Naive thymus-derived CD4-positive, alpha-beta T cell (primary cell): ENCODE measurements at regions of chr3 and their contacts with region 1.

Region 1: GRCh38 chr3:4030624-4031023 is 231.4 kb downstream of the LRRN1 start:
- DNase-seq: no peak
- ATAC-seq: no peak
- H3K4me3 ChIP-seq: no peak overlapping the region
- H3K4me3 Mint-ChIP-seq: no peak overlapping the region
- H3K27ac ChIP-seq: no peak overlapping the region
- H3K27ac Mint-ChIP-seq: no peak overlapping the region
- H3K4me1 ChIP-seq: no peaks in the 10 kb centered on the region
- H3K4me1 Mint-ChIP-seq: no peaks in the 10 kb centered on the region
- H3K27me3 ChIP-seq: no peaks in the 10 kb centered on the region
- H3K27me3 Mint-ChIP-seq: no peaks in the 10 kb centered on the region

Region 2: GRCh38 chr3:3991598-3991997 is 39.0 kb before region 1 on chr3:
- CTCF ChIA-PET with region 1: no interaction called
- POLR2A ChIA-PET with region 1: no interaction called
- intact Hi-C with region 1: loop called in 1 of 2 experiments (anchors 1 kb)
- DNase-seq: no peak
- ATAC-seq: no peak
- H3K4me3 ChIP-seq: no peak overlapping the region
- H3K4me3 Mint-ChIP-seq: no peak overlapping the region
- H3K27ac ChIP-seq: no peak overlapping the region
- H3K27ac Mint-ChIP-seq: peak overlapping the region in 1 of 9 donors; percentile 76
- H3K4me1 ChIP-seq: no peaks in the 10 kb centered on the region
- H3K4me1 Mint-ChIP-seq: peaks cover 0 to 4% (median 0%) of the 10 kb centered on the region in 7 donors
- H3K27me3 ChIP-seq: no peaks in the 10 kb centered on the region
- H3K27me3 Mint-ChIP-seq: no peaks in the 10 kb centered on the region